Prostate gland (tissue), 2 donors: ENCODE measurements at regions of chr20 and their contacts with region 1.

Region 1: GRCh38 chr20:53828682-53829254 is 235.1 kb upstream of the ZNF217 start:
- DNase-seq: peak; percentile 46
- H3K4me3 ChIP-seq: no peak overlapping the region
- H3K27ac ChIP-seq: peak overlapping the region; percentile 76 to 80
- H3K4me1 ChIP-seq: no peaks in the 10 kb centered on the region
- H3K27me3 ChIP-seq: no peaks in the 10 kb centered on the region
- CTCF ChIP-seq: no peak
- POLR2A ChIP-seq: no peak

Region 2: GRCh38 chr20:53594068-53595017 is 234.4 kb before region 1 on chr20:
- intact Hi-C with region 1: loop called (anchors 5 kb)
- DNase-seq: peak; percentile 96
- H3K4me3 ChIP-seq: peak overlapping the region; percentile 89 to 92
- H3K27ac ChIP-seq: peak overlapping the region; percentile 98 to 99
- H3K4me1 ChIP-seq: no peaks in the 10 kb centered on the region
- H3K27me3 ChIP-seq: no peaks in the 10 kb centered on the region
- CTCF ChIP-seq: peak in 3 of 4 experiments; percentile 9 to 38 (median 33)
- POLR2A ChIP-seq: peak; percentile 88

Region 3: DNA sequence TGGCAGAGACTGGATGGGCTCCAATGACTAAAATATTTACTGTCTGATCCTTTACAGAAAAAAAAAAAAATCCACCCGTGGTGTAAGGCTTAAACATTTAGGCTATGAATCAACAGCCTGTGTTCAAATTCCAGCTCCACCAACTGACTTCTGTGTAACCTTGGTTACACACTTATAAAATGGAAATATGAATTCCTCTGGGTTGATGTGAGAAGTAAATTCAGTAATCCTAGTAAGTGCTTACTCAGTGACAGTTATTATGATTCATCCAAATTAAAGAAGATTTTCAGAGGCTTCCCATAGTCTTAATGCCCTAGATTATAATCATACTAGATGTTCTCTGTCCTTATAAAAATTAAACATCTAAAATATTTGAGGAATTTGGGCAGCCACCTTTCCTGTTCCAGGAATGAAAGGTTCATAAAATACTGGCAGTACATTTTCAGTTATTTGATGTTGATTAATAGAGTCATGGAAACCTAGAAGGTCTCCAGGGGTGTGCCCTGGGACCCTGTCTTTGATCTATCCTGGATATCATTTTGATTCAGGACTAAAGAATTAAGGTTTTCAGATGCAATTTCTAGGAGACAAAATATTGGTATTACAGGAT is 54.9 kb before region 1 on chr20:
- intact Hi-C with region 1: loop called (anchors 10 kb)
- DNase-seq: no peak
- H3K4me3 ChIP-seq: no peak overlapping the region
- H3K27ac ChIP-seq: peak overlapping the region; percentile 2 to 15
- H3K4me1 ChIP-seq: no peaks in the 10 kb centered on the region
- H3K27me3 ChIP-seq: no peaks in the 10 kb centered on the region
- CTCF ChIP-seq: no peak
- POLR2A ChIP-seq: no peak

Region 4: GRCh38 chr20:53869466-53870258 is 40.9 kb after region 1 on chr20:
- intact Hi-C with region 1: loop called (anchors 2 kb)
- DNase-seq: peak; percentile 87
- H3K4me3 ChIP-seq: no peak overlapping the region
- H3K27ac ChIP-seq: peak overlapping the region; percentile 65 to 78
- H3K4me1 ChIP-seq: peaks cover 16% of the 10 kb centered on the region
- H3K27me3 ChIP-seq: no peaks in the 10 kb centered on the region
- CTCF ChIP-seq: peak; percentile 60 to 92 (median 86)
- POLR2A ChIP-seq: no peak

Region 5: GRCh38 chr20:53915446-53916172 is 86.8 kb after region 1 on chr20:
- intact Hi-C with region 1: loop called (anchors 5 kb)
- DNase-seq: peak; percentile 92
- H3K4me3 ChIP-seq: peak overlapping the region; percentile 37 to 47
- H3K27ac ChIP-seq: peak overlapping the region; percentile 77 to 79
- H3K4me1 ChIP-seq: peaks cover 10% of the 10 kb centered on the region
- H3K27me3 ChIP-seq: no peaks in the 10 kb centered on the region
- CTCF ChIP-seq: peak; percentile 89 to 95 (median 92)
- POLR2A ChIP-seq: no peak